ENCODE measurements at regions of chr6 and their contacts with region 1.

Region 1: DNA sequence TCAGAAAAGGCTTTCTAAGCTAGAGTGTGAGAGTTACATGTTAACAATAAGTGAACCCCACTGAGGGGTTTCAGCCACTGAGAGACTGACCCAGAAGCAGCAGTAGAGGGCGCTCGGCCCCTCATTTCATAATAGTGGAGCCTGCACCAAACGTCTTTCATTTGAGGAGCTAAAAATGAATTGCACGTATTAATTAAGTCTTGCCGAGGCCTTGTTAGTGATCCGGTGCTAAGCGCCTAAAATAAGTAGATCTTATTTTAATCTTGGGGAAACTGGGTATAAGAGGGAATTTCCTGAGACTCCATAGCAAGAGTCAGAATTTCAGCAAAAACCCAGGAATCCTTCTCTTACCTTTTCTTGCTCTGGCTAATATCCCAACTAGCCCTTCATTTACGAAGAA is 209.7 kb downstream of the FARS2 start:
- DNase-seq: peak; percentile 62 to 75
- ATAC-seq: peak; percentile 72 to 96 (median 94)
- H3K4me3 ChIP-seq: no peak overlapping the region
- H3K4me3 Mint-ChIP-seq: no peak overlapping the region
- H3K27ac ChIP-seq: no peak overlapping the region
- H3K27ac Mint-ChIP-seq: no peak overlapping the region
- H3K4me1 ChIP-seq: peaks cover 4% of the 10 kb centered on the region
- H3K4me1 Mint-ChIP-seq: peaks cover 4 to 11% of the 10 kb centered on the region in 2 donors
- H3K27me3 ChIP-seq: no peaks in the 10 kb centered on the region
- H3K27me3 Mint-ChIP-seq: no peaks in the 10 kb centered on the region
- CTCF ChIP-seq: peak; percentile 97

Region 2: GRCh38 chr6:5517796-5518195 is 46.8 kb after region 1 on chr6:
- intact Hi-C with region 1: loop called (anchors 1 kb)
- DNase-seq: peak; percentile 36 to 60
- ATAC-seq: peak; percentile 73 to 79 (median 76)
- H3K4me3 ChIP-seq: no peak overlapping the region
- H3K4me3 Mint-ChIP-seq: peak overlapping the region; percentile 80
- H3K27ac ChIP-seq: peak overlapping the region; percentile 42
- H3K27ac Mint-ChIP-seq: peak overlapping the region; percentile 82 to 89
- H3K4me1 ChIP-seq: peaks cover 44% of the 10 kb centered on the region
- H3K4me1 Mint-ChIP-seq: peaks cover 61 to 63% of the 10 kb centered on the region in 2 donors
- H3K27me3 ChIP-seq: no peaks in the 10 kb centered on the region
- H3K27me3 Mint-ChIP-seq: peaks cover 0 to under 1% of the 10 kb centered on the region in 2 donors
- CTCF ChIP-seq: no peak

Region 3: DNA sequence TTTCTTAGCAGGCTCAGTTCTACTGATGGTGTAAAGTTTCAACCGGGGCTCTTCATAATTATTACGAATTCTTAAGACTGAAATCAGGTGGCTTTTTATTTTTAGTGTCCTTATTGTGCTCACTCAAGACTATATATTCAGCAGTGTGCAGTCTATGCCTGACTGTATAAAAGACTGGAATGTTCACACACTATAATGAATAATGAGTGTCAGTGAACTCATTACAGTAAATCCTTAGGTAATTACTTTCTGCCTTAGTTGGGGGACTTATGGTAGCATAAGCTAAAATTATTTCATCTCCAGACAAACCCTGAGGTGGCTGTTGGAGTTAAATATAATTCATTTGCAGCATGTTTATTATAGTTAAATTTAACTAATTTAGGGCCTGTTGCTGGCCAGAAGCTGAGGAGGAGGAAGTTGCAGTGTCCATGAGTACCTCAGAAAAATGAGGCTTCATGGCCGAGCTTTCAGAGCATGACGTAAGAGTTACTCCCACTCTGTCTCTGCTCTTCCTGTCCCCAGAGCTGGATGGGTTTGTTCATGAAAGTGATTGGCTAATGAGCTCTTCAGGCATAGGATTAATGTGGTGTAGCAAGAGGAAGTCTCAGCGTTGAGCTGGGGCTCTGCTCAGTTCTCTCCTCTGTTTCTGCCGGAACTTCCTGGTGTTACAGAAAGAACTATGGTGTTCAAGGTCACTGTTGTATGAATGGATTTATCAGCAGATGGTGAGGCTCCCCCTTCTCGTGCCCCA is 199.9 kb after region 1 on chr6:
- intact Hi-C with region 1: loop called (anchors 2 kb)
- DNase-seq: peak in 1 of 2 donors; percentile 51
- ATAC-seq: peak; percentile 39 to 65 (median 59)
- H3K4me3 ChIP-seq: no peak overlapping the region
- H3K4me3 Mint-ChIP-seq: peak overlapping the region; percentile 47
- H3K27ac ChIP-seq: no peak overlapping the region
- H3K27ac Mint-ChIP-seq: peak overlapping the region; percentile 49 to 79
- H3K4me1 ChIP-seq: peaks cover 25% of the 10 kb centered on the region
- H3K4me1 Mint-ChIP-seq: peaks cover 35 to 39% of the 10 kb centered on the region in 2 donors
- H3K27me3 ChIP-seq: no peaks in the 10 kb centered on the region
- H3K27me3 Mint-ChIP-seq: no peaks in the 10 kb centered on the region
- CTCF ChIP-seq: no peak

Region 4: DNA sequence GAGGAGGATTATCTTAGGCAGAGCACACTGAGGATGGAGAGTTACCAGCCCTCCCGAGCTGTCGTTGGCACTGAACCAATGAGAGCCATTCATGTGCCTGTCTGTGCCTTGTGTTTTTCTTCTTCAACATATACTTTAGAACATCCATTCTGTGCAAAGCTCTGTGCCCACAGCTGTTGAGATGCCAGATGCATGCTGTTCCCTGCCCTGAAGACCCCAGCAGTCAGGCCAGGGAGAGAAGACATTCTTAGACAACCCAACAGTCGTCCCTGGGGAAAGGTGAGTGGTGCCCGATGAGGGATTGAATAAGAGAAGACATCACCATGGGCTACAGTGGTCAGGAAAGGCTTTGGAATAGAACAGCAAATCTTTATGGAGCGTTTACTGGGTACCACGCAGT is 421.6 kb after region 1 on chr6:
- intact Hi-C with region 1: loop called (anchors 5 kb)
- DNase-seq: no peak
- ATAC-seq: peak in 1 of 3 donors; percentile 12
- H3K4me3 ChIP-seq: no peak overlapping the region
- H3K4me3 Mint-ChIP-seq: peak overlapping the region; percentile 91
- H3K27ac ChIP-seq: peak overlapping the region; percentile 59
- H3K27ac Mint-ChIP-seq: peak overlapping the region; percentile 88 to 91
- H3K4me1 ChIP-seq: peaks cover 10% of the 10 kb centered on the region
- H3K4me1 Mint-ChIP-seq: peaks cover 8 to 14% of the 10 kb centered on the region in 2 donors
- H3K27me3 ChIP-seq: no peaks in the 10 kb centered on the region
- H3K27me3 Mint-ChIP-seq: peaks cover 0 to 3% of the 10 kb centered on the region in 2 donors
- CTCF ChIP-seq: no peak

Region 5: GRCh38 chr6:6008648-6009421 is 537.8 kb after region 1 on chr6:
- intact Hi-C with region 1: loop called (anchors 2 kb)
- DNase-seq: peak in 1 of 2 donors; percentile 57
- ATAC-seq: peak; percentile 68 to 73 (median 73)
- H3K4me3 ChIP-seq: peak overlapping the region; percentile 30
- H3K4me3 Mint-ChIP-seq: peak overlapping the region; percentile 91
- H3K27ac ChIP-seq: no peak overlapping the region
- H3K27ac Mint-ChIP-seq: peak overlapping the region in 1 of 2 donors; percentile 65
- H3K4me1 ChIP-seq: peaks cover 46% of the 10 kb centered on the region
- H3K4me1 Mint-ChIP-seq: peaks cover 52 to 54% of the 10 kb centered on the region in 2 donors
- H3K27me3 ChIP-seq: peaks cover 59% of the 10 kb centered on the region
- H3K27me3 Mint-ChIP-seq: peaks cover 58 to 75% of the 10 kb centered on the region in 2 donors
- CTCF ChIP-seq: no peak

Region 6: DNA sequence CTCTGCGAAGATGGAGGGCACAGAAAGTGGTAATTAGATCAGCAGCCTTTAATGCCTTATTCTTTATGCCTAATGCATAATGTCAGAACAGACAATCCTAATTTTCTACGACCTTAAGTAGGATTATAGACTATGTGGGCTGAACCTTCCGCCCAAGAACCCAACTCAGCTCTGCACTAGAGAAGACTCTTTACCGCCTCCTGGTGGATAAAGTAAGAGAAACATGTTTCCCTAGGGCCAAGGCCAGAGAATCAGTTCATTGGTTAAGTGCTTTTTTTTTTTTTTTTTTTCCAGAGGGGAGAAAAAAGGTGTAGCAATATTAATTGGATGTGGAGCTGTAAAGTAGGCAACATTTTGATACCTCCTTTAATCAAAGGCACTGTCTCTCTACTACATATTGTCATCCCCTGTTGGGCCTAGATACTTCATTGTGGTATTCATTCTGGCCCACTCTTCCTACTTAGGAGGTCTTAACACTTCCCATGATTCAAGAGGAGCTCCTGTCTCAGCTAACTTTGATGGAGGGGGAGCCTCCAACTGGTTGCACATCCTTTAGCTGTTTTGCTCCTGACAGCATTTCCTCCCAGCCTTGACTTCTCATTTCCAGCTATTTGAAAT is 660.6 kb after region 1 on chr6:
- intact Hi-C with region 1: loop called (anchors 2 kb)
- DNase-seq: peak in 1 of 2 donors; percentile 48
- ATAC-seq: peak in 1 of 3 donors; percentile 44
- H3K4me3 ChIP-seq: no peak overlapping the region
- H3K4me3 Mint-ChIP-seq: no peak overlapping the region
- H3K27ac ChIP-seq: no peak overlapping the region
- H3K27ac Mint-ChIP-seq: no peak overlapping the region
- H3K4me1 ChIP-seq: no peaks in the 10 kb centered on the region
- H3K4me1 Mint-ChIP-seq: no peaks in the 10 kb centered on the region
- H3K27me3 ChIP-seq: no peaks in the 10 kb centered on the region
- H3K27me3 Mint-ChIP-seq: peaks cover 11 to 37% of the 10 kb centered on the region in 2 donors
- CTCF ChIP-seq: peak; percentile 53

Region 7: GRCh38 chr6:6547110-6547879 is 1076.3 kb after region 1 on chr6:
- intact Hi-C with region 1: loop called (anchors 2 kb)
- DNase-seq: peak; percentile 72 to 92
- ATAC-seq: peak; percentile 93 to 95 (median 93)
- H3K4me3 ChIP-seq: peak overlapping the region; percentile 19
- H3K4me3 Mint-ChIP-seq: peak overlapping the region; percentile 70
- H3K27ac ChIP-seq: no peak overlapping the region
- H3K27ac Mint-ChIP-seq: no peak overlapping the region
- H3K4me1 ChIP-seq: peaks cover 17% of the 10 kb centered on the region
- H3K4me1 Mint-ChIP-seq: peaks cover 13 to 19% of the 10 kb centered on the region in 2 donors
- H3K27me3 ChIP-seq: peaks cover 25% of the 10 kb centered on the region
- H3K27me3 Mint-ChIP-seq: peaks cover 34 to 68% of the 10 kb centered on the region in 2 donors
- CTCF ChIP-seq: peak; percentile 85